Right cardiac atrium (tissue), 5 donors: ENCODE measurements at regions of chr3 and their contacts with region 1.

Region 1: GRCh38 chr3:174859112-174859735 is at the start of gene NAALADL2:
- DNase-seq: no peak
- ATAC-seq: no peak
- H3K4me3 ChIP-seq: no peak within 1 kb of the TSS
- H3K27ac ChIP-seq: no peak within 1 kb of the TSS
- H3K4me1 ChIP-seq: peaks cover 2% of the 10 kb centered on the region
- H3K27me3 ChIP-seq: no peaks in the 10 kb centered on the region
- total RNA-seq, gene NAALADL2: 9.6 to 10.7 (median 9.8) TPM

Region 2: DNA sequence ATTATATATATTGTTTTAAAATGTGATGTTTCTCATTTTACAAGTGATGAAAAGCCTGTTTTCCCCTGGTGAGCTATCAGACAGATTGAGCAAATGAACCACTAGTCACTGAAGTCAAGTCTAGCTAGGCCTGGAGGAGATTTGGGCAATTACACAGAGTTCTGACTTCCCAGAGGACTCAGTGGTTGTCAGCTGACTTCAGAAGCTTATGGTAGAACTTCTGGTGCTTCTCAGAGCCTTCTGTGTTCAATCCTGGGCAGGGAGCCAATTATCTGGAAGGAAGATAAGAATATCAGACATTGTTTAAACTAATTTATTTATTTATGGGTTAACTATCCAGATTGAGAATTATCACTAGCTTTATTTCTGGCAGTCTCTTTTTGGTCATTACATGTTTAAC is 37.7 kb before region 1 on chr3:
- intact Hi-C with region 1: loop called in 1 of 4 experiments (anchors 5 kb)
- DNase-seq: no peak
- ATAC-seq: peak; percentile 84 to 86
- H3K4me3 ChIP-seq: no peak overlapping the region
- H3K27ac ChIP-seq: no peak overlapping the region
- H3K4me1 ChIP-seq: no peaks in the 10 kb centered on the region
- H3K27me3 ChIP-seq: no peaks in the 10 kb centered on the region

Region 3: GRCh38 chr3:175002732-175003143 is 143.5 kb after region 1 on chr3:
- intact Hi-C with region 1: no loop called
- DNase-seq: no peak
- ATAC-seq: no peak
- H3K4me3 ChIP-seq: no peak overlapping the region
- H3K27ac ChIP-seq: no peak overlapping the region
- H3K4me1 ChIP-seq: no peaks in the 10 kb centered on the region
- H3K27me3 ChIP-seq: no peaks in the 10 kb centered on the region